ENCODE measurements at regions of chr20 and their contacts with region 1.

Region 1: DNA sequence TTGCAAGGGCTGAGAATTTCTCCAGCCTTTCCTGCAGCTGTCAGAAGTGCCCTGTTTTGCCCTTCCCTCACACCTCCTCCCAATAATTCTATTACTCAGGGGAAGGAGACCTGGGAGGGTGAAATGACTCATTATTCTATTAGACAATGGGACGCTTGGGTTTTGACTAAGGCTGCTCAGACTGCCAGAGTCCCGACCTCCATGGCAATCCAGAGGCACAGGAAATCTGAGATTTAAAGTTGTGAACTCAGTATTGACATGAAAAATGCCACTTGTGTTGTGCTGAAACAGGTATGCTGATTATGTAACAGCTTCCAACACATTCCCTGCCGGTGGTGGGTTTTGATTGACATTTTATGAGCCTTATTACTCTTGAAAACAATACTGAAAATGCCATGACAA is 625.9 kb upstream of the FLRT3 start:
- DNase-seq: peak; percentile 87
- H3K4me3 Mint-ChIP-seq: no peak overlapping the region
- H3K27ac Mint-ChIP-seq: peak overlapping the region; percentile 57
- H3K4me1 Mint-ChIP-seq: peaks cover 35% of the 10 kb centered on the region
- H3K27me3 Mint-ChIP-seq: no peaks in the 10 kb centered on the region
- CTCF ChIP-seq: no peak

Region 2: GRCh38 chr20:14948423-14948822 is 14.8 kb before region 1 on chr20:
- CTCF ChIA-PET with region 1: interaction called, 8 read pairs
- POLR2A ChIA-PET with region 1: interaction called, 14 read pairs
- intact Hi-C with region 1: no loop called
- DNase-seq: peak; percentile 14
- H3K4me3 Mint-ChIP-seq: no peak overlapping the region
- H3K27ac Mint-ChIP-seq: no peak overlapping the region
- H3K4me1 Mint-ChIP-seq: peaks cover 14% of the 10 kb centered on the region
- H3K27me3 Mint-ChIP-seq: no peaks in the 10 kb centered on the region
- CTCF ChIP-seq: peak; percentile 24

Region 3: DNA sequence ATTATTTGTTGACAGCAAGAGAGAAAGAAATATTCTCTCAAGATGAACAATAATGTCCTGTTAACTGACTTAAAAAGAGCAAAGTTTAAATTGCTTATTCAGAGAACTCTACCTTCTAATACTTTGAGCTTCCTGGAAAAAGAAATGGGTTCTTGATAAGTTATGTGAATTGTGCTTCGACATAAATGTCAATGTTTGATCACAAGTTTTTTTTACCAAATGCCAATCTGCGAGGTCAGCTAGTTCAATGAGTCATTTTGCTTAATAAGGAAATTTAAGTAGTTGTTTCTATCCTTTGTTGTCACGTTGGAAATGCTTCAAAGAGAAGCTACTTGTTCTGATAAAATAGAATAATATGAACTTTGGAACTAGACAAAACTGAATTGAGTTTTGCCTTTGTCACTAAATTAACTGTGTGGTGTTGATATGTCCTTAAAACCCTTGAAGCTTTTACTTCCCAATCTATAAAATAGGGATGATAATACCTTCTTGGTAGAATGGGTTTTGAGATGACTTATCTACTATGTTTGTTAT is 16.3 kb after region 1 on chr20:
- CTCF ChIA-PET with region 1: interaction called, 4 read pairs
- POLR2A ChIA-PET with region 1: interaction called, 15 read pairs
- intact Hi-C with region 1: no loop called
- DNase-seq: no peak
- H3K4me3 Mint-ChIP-seq: no peak overlapping the region
- H3K27ac Mint-ChIP-seq: no peak overlapping the region
- H3K4me1 Mint-ChIP-seq: no peaks in the 10 kb centered on the region
- H3K27me3 Mint-ChIP-seq: no peaks in the 10 kb centered on the region
- CTCF ChIP-seq: no peak

Region 4: GRCh38 chr20:14997635-14998185 is 34.4 kb after region 1 on chr20:
- CTCF ChIA-PET with region 1: no interaction called
- POLR2A ChIA-PET with region 1: interaction called, 4 read pairs
- intact Hi-C with region 1: loop called (anchors 2 kb)
- DNase-seq: peak; percentile 90
- H3K4me3 Mint-ChIP-seq: no peak overlapping the region
- H3K27ac Mint-ChIP-seq: peak overlapping the region; percentile 54
- H3K4me1 Mint-ChIP-seq: peaks cover 21% of the 10 kb centered on the region
- H3K27me3 Mint-ChIP-seq: no peaks in the 10 kb centered on the region
- CTCF ChIP-seq: no peak

Region 5: DNA sequence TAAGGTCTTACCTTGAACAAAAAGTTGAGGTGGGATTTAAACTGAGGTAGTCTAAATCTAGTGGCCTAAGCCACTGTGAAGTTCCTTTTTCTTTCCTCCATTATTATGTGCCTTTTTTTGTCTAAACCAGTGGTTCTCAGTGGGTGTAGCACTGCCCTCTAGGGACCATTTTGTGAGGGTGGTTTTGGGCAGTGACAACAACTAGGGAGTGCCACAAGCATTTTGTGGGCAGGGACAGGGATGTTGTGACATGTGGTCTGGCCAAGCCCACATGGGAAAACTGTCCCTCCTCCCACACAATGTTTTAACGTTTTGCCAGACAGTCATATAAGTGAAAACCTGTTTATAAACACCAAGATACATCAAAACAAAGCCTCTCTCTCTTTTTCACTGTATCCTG is 273.5 kb after region 1 on chr20:
- CTCF ChIA-PET with region 1: no interaction called
- POLR2A ChIA-PET with region 1: no interaction called
- intact Hi-C with region 1: loop called (anchors 5 kb)
- DNase-seq: peak; percentile 65
- H3K4me3 Mint-ChIP-seq: no peak overlapping the region
- H3K27ac Mint-ChIP-seq: no peak overlapping the region
- H3K4me1 Mint-ChIP-seq: no peaks in the 10 kb centered on the region
- H3K27me3 Mint-ChIP-seq: no peaks in the 10 kb centered on the region
- CTCF ChIP-seq: peak; percentile 63